Activated CD4-positive, alpha-beta T cell treated with anti-CD3 and anti-CD28 coated beads, Interleukin-2, amount 10 ng/mL, durations not matched to agents 24 days and 14 days (primary cell): ENCODE measurements at regions of chr7 and their contacts with region 1.

Region 1: DNA sequence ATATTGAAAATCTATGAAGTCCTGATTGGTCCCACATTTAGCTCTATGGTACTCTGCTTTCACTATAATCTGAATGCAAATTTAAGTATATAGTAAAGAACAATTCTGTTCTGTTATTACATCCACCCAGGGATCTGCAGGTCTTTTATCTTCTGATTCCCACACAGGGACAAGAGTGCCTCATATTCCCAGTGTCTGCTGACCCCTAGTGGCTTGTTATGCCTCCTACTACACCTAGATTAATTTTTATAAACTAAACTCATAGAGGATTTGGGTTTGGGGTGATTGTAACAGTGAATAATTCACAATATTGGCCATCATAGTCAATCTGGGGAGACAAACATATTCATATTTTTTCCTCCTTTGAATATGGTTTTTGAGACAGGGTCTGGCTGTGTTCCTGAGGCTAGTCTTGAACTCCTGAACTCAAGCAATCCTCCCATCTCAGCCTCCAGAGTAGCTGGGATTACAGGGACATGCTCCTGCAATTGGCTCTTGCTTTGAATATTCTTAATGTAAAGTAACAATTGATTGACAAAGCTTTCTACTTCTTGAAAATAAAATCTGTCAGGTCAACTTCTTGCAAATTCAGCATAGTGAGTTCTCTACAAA is 282.1 kb downstream of the KCND2 start:
- DNase-seq: no peak
- H3K4me3 Mint-ChIP-seq: no peak overlapping the region
- H3K27ac Mint-ChIP-seq: no peak overlapping the region
- H3K4me1 Mint-ChIP-seq: no peaks in the 10 kb centered on the region
- H3K27me3 Mint-ChIP-seq: no peaks in the 10 kb centered on the region

Region 2: GRCh38 chr7:119270045-119270464 is 1285.0 kb before region 1 on chr7:
- intact Hi-C with region 1: loop called (anchors 10 kb)
- DNase-seq: peak; percentile 77
- H3K4me3 Mint-ChIP-seq: no peak overlapping the region
- H3K27ac Mint-ChIP-seq: no peak overlapping the region
- H3K4me1 Mint-ChIP-seq: no peaks in the 10 kb centered on the region
- H3K27me3 Mint-ChIP-seq: no peaks in the 10 kb centered on the region